CD4-positive, alpha-beta T cell (primary cell): ENCODE measurements at regions of chr1 and their contacts with region 1.

Region 1: DNA sequence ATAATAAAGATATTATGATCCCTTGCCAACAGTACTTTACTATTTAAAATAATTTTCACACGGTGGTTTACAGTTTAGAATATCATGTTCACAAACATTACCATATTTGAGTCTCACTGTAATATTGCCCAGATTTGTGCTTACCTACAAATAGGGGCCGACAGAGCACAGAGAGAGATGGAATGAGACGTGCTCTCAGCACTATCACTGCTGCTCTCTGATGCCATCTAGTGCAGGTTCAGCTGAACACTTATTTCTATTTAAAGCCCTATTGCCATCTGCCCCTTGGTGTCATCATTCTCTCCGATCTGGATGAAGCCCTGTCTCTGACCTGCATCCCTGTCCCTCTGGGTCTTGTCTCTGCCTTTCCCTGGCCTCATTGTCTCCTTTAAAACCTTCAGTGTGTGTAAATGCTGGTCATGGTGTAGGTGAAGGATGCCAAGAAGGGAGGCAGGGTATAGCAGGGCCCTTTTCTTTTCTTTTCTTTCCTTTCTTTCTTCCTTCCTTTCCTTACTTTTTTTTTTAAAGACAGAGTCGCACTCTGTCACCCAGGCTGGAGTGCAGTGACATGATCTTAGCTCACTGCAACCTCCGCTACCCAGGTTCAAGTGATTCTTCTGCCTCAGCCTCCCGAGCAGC is 6.9 kb upstream of the GPATCH4 start:
- DNase-seq: peak in 13 of 14 experiments; percentile 42 to 87 (median 53)
- ATAC-seq: peak; percentile 96
- H3K4me3 ChIP-seq: no peak overlapping the region
- H3K4me3 Mint-ChIP-seq: peak overlapping the region; percentile 72
- H3K27ac ChIP-seq: no peak overlapping the region
- H3K27ac Mint-ChIP-seq: no peak overlapping the region
- H3K4me1 ChIP-seq: peaks cover 10% of the 10 kb centered on the region
- H3K4me1 Mint-ChIP-seq: peaks cover 15% of the 10 kb centered on the region
- H3K27me3 ChIP-seq: peaks cover 0 to 5% of the 10 kb centered on the region in 2 experiments
- H3K27me3 Mint-ChIP-seq: peaks cover 21% of the 10 kb centered on the region
- CTCF ChIP-seq: peak; percentile 77

Region 2: GRCh38 chr1:156379420-156380165 is 228.6 kb before region 1 on chr1:
- CTCF ChIA-PET with region 1: no interaction called
- POLR2A ChIA-PET with region 1: no interaction called
- intact Hi-C with region 1: loop called in 1 of 2 experiments (anchors 1 kb)
- DNase-seq: no peak
- ATAC-seq: no peak
- H3K4me3 ChIP-seq: no peak overlapping the region
- H3K4me3 Mint-ChIP-seq: no peak overlapping the region
- H3K27ac ChIP-seq: no peak overlapping the region
- H3K27ac Mint-ChIP-seq: no peak overlapping the region
- H3K4me1 ChIP-seq: no peaks in the 10 kb centered on the region
- H3K4me1 Mint-ChIP-seq: no peaks in the 10 kb centered on the region
- H3K27me3 ChIP-seq: peaks cover 0 to 5% of the 10 kb centered on the region in 2 experiments
- H3K27me3 Mint-ChIP-seq: peaks cover 8% of the 10 kb centered on the region
- CTCF ChIP-seq: no peak

Region 3: DNA sequence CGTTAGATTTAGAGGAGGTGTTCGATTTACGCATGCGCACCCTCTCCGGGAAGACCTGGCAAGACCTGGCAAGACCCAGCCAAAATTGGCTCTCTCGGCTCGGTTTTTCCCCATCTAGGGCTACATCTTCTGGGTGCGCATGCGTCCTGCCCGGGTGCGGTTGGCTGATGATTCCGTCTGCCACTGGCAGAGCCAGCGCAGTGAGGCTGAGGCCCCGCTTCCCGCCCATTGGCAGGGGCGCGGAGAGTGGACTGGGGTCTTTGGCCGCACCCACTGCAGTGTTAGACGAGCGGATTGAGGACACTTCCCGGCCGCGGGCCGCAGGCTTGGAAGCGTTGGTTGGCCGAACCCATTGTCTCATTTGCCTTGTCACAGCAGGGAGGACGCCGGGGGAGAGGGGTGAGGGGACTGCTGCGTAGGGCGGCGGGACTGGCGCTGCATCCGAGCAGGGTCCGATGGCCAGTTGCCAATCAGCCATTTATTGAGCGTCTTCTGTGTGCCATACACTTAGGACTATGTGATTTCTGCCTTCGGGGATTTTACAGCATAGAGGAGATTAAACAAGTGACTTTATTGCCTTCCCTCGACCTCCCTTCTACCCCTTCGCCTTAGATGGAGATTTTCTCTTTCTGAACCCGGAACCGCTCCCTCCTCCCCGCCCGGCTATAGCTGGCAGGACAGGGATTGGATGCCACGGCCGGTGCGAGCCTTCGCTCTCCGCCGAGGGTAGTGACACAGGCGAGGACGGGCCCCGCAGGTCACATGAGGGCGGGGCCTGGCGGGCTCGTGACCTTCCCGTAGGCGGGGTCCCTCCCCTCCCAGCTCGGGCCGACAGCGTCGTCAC is 151.3 kb before region 1 on chr1:
- CTCF ChIA-PET with region 1: interaction called, 3 read pairs
- POLR2A ChIA-PET with region 1: interaction called, 8 read pairs
- intact Hi-C with region 1: loop called (anchors 1 kb)
- DNase-seq: peak; percentile 93 to 99 (median 96)
- ATAC-seq: peak; percentile 80
- H3K4me3 ChIP-seq: peak overlapping the region; percentile 56
- H3K4me3 Mint-ChIP-seq: peak overlapping the region; percentile 94
- H3K27ac ChIP-seq: peak overlapping the region; percentile 93 to 100
- H3K27ac Mint-ChIP-seq: peak overlapping the region; percentile 100
- H3K4me1 ChIP-seq: peaks cover 19% of the 10 kb centered on the region
- H3K4me1 Mint-ChIP-seq: peaks cover 25% of the 10 kb centered on the region
- H3K27me3 ChIP-seq: no peaks in the 10 kb centered on the region
- H3K27me3 Mint-ChIP-seq: no peaks in the 10 kb centered on the region
- CTCF ChIP-seq: no peak

Region 4: GRCh38 chr1:156583821-156584622 is 24.1 kb before region 1 on chr1:
- CTCF ChIA-PET with region 1: interaction called, 15 read pairs
- POLR2A ChIA-PET with region 1: interaction called, 5 read pairs
- intact Hi-C with region 1: loop called (anchors 1 kb)
- DNase-seq: peak; percentile 44 to 90 (median 69)
- ATAC-seq: peak; percentile 63
- H3K4me3 ChIP-seq: no peak overlapping the region
- H3K4me3 Mint-ChIP-seq: peak overlapping the region; percentile 63
- H3K27ac ChIP-seq: no peak overlapping the region
- H3K27ac Mint-ChIP-seq: peak overlapping the region; percentile 90
- H3K4me1 ChIP-seq: peaks cover 32% of the 10 kb centered on the region
- H3K4me1 Mint-ChIP-seq: peaks cover 33% of the 10 kb centered on the region
- H3K27me3 ChIP-seq: no peaks in the 10 kb centered on the region
- H3K27me3 Mint-ChIP-seq: no peaks in the 10 kb centered on the region
- CTCF ChIP-seq: peak; percentile 85

Region 5: DNA sequence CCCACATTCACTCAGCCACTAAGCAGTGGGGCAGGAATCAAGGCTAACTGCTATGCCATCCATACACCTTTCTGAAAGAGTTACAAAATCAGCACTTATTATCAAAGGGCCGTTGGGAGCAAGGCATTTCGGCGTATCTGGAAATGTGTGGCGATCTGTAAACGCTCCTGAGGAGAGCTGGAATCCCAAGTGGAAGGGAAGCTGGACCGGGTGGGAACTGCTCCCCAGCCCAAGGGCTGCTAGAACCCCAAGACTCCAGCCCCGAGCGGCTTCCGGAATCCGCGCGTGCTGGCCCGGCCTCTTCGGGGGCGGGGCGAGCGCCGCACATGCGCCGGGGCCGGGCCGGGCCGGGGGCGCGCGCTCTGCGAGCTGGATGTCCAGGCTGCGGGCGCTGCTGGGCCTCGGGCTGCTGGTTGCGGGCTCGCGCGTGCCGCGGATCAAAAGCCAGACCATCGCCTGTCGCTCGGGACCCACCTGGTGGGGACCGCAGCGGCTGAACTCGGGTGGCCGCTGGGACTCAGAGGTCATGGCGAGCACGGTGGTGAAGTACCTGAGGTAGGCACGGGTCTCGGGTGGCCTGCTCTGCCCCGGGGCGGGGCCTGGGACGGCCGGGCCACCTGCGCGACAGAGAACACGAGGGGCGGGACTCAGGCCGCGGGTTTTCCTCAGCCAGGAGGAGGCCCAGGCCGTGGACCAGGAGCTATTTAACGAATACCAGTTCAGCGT is 16.6 kb before region 1 on chr1 and contains the start of gene NAXE:
- CTCF ChIA-PET with region 1: interaction called, 10 read pairs
- POLR2A ChIA-PET with region 1: interaction called, 3 read pairs
- intact Hi-C with region 1: no loop called
- DNase-seq: peak; percentile 43 to 87 (median 66)
- ATAC-seq: peak; percentile 96
- H3K4me3 ChIP-seq: peak within 1 kb of the TSS; percentile 78
- H3K4me3 Mint-ChIP-seq: peak within 1 kb of the TSS; percentile 90
- H3K27ac ChIP-seq: peak within 1 kb of the TSS; percentile 37 to 40
- H3K27ac Mint-ChIP-seq: peak within 1 kb of the TSS; percentile 89
- H3K4me1 ChIP-seq: peaks cover 26% of the 10 kb centered on the region
- H3K4me1 Mint-ChIP-seq: peaks cover 28% of the 10 kb centered on the region
- H3K27me3 ChIP-seq: no peaks in the 10 kb centered on the region
- H3K27me3 Mint-ChIP-seq: no peaks in the 10 kb centered on the region
- CTCF ChIP-seq: no peak
- total RNA-seq, gene NAXE: 23.3 to 27.8 TPM

Region 6: GRCh38 chr1:157404063-157404501 is 795.9 kb after region 1 on chr1:
- CTCF ChIA-PET with region 1: no interaction called
- POLR2A ChIA-PET with region 1: no interaction called
- intact Hi-C with region 1: no loop called
- DNase-seq: peak in 1 of 14 experiments; percentile 5
- ATAC-seq: no peak
- H3K4me3 ChIP-seq: no peak overlapping the region
- H3K4me3 Mint-ChIP-seq: no peak overlapping the region
- H3K27ac ChIP-seq: no peak overlapping the region
- H3K27ac Mint-ChIP-seq: no peak overlapping the region
- H3K4me1 ChIP-seq: peaks cover 3% of the 10 kb centered on the region
- H3K4me1 Mint-ChIP-seq: no peaks in the 10 kb centered on the region
- H3K27me3 ChIP-seq: peaks cover 9 to 22% of the 10 kb centered on the region in 2 experiments
- H3K27me3 Mint-ChIP-seq: peaks cover 41% of the 10 kb centered on the region
- CTCF ChIP-seq: no peak